CD4-positive, alpha-beta T cell (primary cell): ENCODE measurements at regions of chr13 and their contacts with region 1.

Region 1: DNA sequence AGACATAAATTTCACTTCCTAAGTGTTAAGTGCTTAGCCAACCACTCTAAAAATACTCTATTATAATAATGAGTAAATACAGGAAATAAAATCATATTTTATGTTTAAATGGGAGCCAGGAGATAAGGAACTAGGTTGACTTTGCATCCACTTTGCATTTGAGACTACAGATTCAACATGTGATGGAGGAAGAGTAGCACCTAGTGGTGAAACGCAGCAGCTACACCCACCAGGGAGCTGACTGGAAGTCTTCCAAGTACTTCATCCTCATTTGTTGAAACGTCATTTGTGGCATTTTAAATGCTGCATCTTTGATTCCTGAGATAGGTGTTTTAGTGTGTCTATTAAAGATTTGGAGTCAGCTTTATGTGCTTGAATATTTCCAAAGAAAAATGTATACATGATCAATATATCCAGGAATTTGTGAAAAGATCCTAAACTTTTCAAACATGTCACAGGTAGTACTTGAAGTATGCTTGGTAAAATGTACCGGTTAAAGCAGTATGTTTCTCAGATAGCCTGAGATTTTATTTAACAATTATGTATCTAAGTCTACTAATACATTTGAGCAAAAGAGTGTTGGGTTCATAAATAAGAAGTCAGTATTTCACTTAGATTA is 17.4 kb upstream of the KCTD12 start:
- DNase-seq: peak; percentile 48 to 83 (median 56)
- ATAC-seq: peak; percentile 91
- H3K4me3 ChIP-seq: no peak overlapping the region
- H3K4me3 Mint-ChIP-seq: no peak overlapping the region
- H3K27ac ChIP-seq: no peak overlapping the region
- H3K27ac Mint-ChIP-seq: no peak overlapping the region
- H3K4me1 ChIP-seq: no peaks in the 10 kb centered on the region
- H3K4me1 Mint-ChIP-seq: no peaks in the 10 kb centered on the region
- H3K27me3 ChIP-seq: no peaks in the 10 kb centered on the region
- H3K27me3 Mint-ChIP-seq: peaks cover 5% of the 10 kb centered on the region
- CTCF ChIP-seq: peak; percentile 99

Region 2: GRCh38 chr13:75691183-75691582 is 1212.5 kb before region 1 on chr13:
- CTCF ChIA-PET with region 1: interaction called, 12 read pairs
- POLR2A ChIA-PET with region 1: no interaction called
- intact Hi-C with region 1: loop called (anchors 1 to 2 kb)
- DNase-seq: no peak
- ATAC-seq: no peak
- H3K4me3 ChIP-seq: no peak overlapping the region
- H3K4me3 Mint-ChIP-seq: no peak overlapping the region
- H3K27ac ChIP-seq: no peak overlapping the region
- H3K27ac Mint-ChIP-seq: no peak overlapping the region
- H3K4me1 ChIP-seq: no peaks in the 10 kb centered on the region
- H3K4me1 Mint-ChIP-seq: no peaks in the 10 kb centered on the region
- H3K27me3 ChIP-seq: no peaks in the 10 kb centered on the region
- H3K27me3 Mint-ChIP-seq: no peaks in the 10 kb centered on the region
- CTCF ChIP-seq: no peak

Region 3: DNA sequence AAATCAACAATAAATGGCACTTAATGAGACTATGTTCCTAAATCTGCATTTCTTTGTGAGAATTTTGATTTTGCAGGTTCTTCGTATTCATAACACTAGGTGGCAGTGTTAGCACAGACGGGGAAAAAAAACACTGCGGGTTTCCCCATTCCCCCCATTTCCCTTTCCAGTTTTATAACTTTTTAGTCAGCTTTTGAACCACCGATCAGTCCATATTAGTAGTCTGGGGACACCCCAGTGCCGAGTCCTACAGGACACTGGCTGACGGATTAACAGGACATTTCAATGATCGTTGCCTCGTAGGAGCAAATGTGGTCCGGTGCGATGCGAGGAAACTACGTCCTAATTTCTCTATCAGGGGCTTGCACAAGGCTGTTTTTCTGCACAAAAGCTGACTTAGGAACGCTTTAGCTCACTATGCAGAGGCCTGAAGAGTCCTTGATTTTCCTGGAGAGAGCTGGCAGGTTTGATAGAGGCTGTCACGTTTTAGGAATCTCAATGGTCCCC is 1033.2 kb before region 1 on chr13:
- CTCF ChIA-PET with region 1: interaction called, 9 read pairs
- POLR2A ChIA-PET with region 1: interaction called, 3 read pairs
- intact Hi-C with region 1: loop called (anchors 1 kb)
- DNase-seq: peak in 7 of 14 experiments; percentile 2 to 63 (median 39)
- ATAC-seq: peak; percentile 64
- H3K4me3 ChIP-seq: peak overlapping the region; percentile 44
- H3K4me3 Mint-ChIP-seq: peak overlapping the region; percentile 79
- H3K27ac ChIP-seq: peak overlapping the region; percentile 34 to 50
- H3K27ac Mint-ChIP-seq: peak overlapping the region; percentile 80
- H3K4me1 ChIP-seq: peaks cover 7% of the 10 kb centered on the region
- H3K4me1 Mint-ChIP-seq: peaks cover 17% of the 10 kb centered on the region
- H3K27me3 ChIP-seq: peaks cover 0 to 4% of the 10 kb centered on the region in 2 experiments
- H3K27me3 Mint-ChIP-seq: peaks cover 4% of the 10 kb centered on the region
- CTCF ChIP-seq: peak; percentile 86

Region 4: DNA sequence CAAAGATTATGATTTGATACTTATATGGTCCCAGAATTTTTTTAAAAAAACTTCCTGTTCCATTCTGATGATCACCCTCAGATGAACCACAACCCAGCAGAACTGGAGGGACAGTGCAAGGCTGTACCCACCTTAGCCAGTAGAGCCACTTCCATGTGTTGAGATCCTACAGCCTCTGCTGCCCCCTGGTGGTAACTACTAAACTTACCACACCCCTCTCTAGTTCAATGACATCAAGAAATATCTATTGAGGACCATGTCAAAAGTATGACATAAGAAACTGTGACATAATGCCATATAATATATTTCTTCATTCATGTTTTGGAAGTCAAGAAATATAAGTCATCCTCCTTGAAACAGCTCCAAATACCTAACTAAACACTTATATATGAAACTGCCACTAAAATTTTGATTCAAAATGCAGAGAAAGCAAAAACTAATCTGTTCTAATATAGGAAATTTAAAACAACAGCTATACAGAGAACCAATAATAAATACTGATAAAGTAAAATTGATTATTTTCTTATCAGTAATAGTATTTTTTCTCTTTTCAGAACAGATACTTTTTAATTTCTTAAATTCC is 430.0 kb before region 1 on chr13:
- CTCF ChIA-PET with region 1: no interaction called
- POLR2A ChIA-PET with region 1: no interaction called
- intact Hi-C with region 1: loop called (anchors 1 to 5 kb)
- DNase-seq: peak; percentile 40 to 85 (median 60)
- ATAC-seq: peak; percentile 95
- H3K4me3 ChIP-seq: no peak overlapping the region
- H3K4me3 Mint-ChIP-seq: no peak overlapping the region
- H3K27ac ChIP-seq: no peak overlapping the region
- H3K27ac Mint-ChIP-seq: no peak overlapping the region
- H3K4me1 ChIP-seq: no peaks in the 10 kb centered on the region
- H3K4me1 Mint-ChIP-seq: no peaks in the 10 kb centered on the region
- H3K27me3 ChIP-seq: no peaks in the 10 kb centered on the region
- H3K27me3 Mint-ChIP-seq: peaks cover 14% of the 10 kb centered on the region
- CTCF ChIP-seq: peak; percentile 89

Region 5: DNA sequence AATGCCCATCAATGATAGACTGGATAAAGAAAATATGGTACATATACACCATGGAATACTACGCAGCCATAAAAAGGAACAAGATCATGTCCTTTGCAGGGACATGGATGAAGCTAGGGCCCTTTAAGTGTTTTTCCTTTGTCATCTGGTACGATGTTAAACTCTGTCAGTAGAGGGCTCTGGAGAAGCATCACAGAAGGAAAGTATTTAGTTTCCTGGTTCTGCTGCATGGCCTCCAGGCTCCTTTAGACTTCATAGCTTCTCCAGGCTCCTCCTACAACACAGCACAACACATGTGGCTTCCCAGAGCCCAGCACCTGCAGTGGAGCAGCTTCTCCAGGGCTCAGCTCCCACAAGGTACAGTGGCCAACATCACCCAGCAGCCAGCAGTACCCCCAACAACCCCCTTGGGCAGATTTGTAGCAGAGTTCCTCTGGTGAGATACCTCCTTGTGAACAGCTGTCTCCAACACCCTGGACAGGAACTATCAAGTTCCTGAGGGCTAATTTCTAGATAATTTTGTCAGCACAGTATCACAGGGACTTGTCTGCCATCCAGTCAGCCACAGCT is 80.9 kb before region 1 on chr13:
- CTCF ChIA-PET with region 1: interaction called, 5 read pairs
- POLR2A ChIA-PET with region 1: no interaction called
- intact Hi-C with region 1: loop called (anchors 1 to 2 kb)
- DNase-seq: peak in 4 of 14 experiments; percentile 6 to 53 (median 27)
- ATAC-seq: peak; percentile 76
- H3K4me3 ChIP-seq: no peak overlapping the region
- H3K4me3 Mint-ChIP-seq: no peak overlapping the region
- H3K27ac ChIP-seq: no peak overlapping the region
- H3K27ac Mint-ChIP-seq: no peak overlapping the region
- H3K4me1 ChIP-seq: no peaks in the 10 kb centered on the region
- H3K4me1 Mint-ChIP-seq: no peaks in the 10 kb centered on the region
- H3K27me3 ChIP-seq: no peaks in the 10 kb centered on the region
- H3K27me3 Mint-ChIP-seq: peaks cover 11% of the 10 kb centered on the region
- CTCF ChIP-seq: no peak

Region 6: GRCh38 chr13:77372275-77372674 is 468.6 kb after region 1 on chr13:
- CTCF ChIA-PET with region 1: no interaction called
- POLR2A ChIA-PET with region 1: no interaction called
- intact Hi-C with region 1: no loop called
- DNase-seq: no peak
- ATAC-seq: no peak
- H3K4me3 ChIP-seq: no peak overlapping the region
- H3K4me3 Mint-ChIP-seq: no peak overlapping the region
- H3K27ac ChIP-seq: no peak overlapping the region
- H3K27ac Mint-ChIP-seq: no peak overlapping the region
- H3K4me1 ChIP-seq: no peaks in the 10 kb centered on the region
- H3K4me1 Mint-ChIP-seq: no peaks in the 10 kb centered on the region
- H3K27me3 ChIP-seq: no peaks in the 10 kb centered on the region
- H3K27me3 Mint-ChIP-seq: no peaks in the 10 kb centered on the region
- CTCF ChIP-seq: no peak